H1 (cell line): ENCODE measurements at regions of chr10 and their contacts with region 1.

Region 1: GRCh38 chr10:71431239-71432100 is 34.8 kb downstream of the CDH23 start:
- DNase-seq: peak in 1 of 2 experiments; percentile 58
- H3K4me3 ChIP-seq: no peak overlapping the region
- H3K27ac ChIP-seq: no peak overlapping the region
- H3K4me1 ChIP-seq: peaks cover 0 to 2% (median 0%) of the 10 kb centered on the region in 4 experiments; a peak in 2 of 7 replicates
- H3K27me3 ChIP-seq: no peaks in the 10 kb centered on the region
- CTCF ChIP-seq: peak; percentile 36 to 62 (median 54)
- EP300 ChIP-seq: no peak
- POLR2A ChIP-seq: no peak
- RAD21 ChIP-seq: peak in 1 of 2 experiments; percentile 38; a peak in 2 of 4 replicates

Region 2: GRCh38 chr10:70866424-70866823 is 565.0 kb before region 1 on chr10:
- CTCF ChIA-PET with region 1: no interaction called
- POLR2A ChIA-PET with region 1: no interaction called
- DNase-seq: no peak
- H3K4me3 ChIP-seq: no peak overlapping the region
- H3K27ac ChIP-seq: no peak overlapping the region
- H3K4me1 ChIP-seq: no peaks in the 10 kb centered on the region
- H3K27me3 ChIP-seq: no peaks in the 10 kb centered on the region
- CTCF ChIP-seq: no peak
- EP300 ChIP-seq: no peak
- POLR2A ChIP-seq: no peak
- RAD21 ChIP-seq: no peak

Region 3: DNA sequence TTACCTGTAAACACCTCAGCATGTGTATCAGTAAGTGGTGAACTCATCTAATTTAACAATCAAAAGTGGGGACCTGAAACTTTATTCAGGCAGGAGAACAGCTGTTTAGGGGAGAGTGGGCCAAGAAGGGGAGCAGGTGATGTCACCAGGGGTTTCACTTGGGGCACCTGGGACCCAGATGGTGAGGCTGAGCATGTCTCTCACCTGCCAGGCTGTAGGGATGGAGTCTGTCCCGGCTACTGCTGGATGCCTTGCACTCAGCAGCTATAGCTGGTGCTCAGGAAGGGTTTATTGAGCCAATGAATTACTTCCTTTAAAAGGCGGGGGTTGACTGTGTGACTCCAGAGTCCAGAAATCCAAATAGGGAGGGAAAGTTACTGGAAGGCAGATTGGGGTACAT is 11.7 kb before region 1 on chr10:
- CTCF ChIA-PET with region 1: interaction called, 87 read pairs
- POLR2A ChIA-PET with region 1: interaction called, 5 read pairs
- DNase-seq: no peak
- H3K4me3 ChIP-seq: no peak overlapping the region
- H3K27ac ChIP-seq: no peak overlapping the region
- H3K4me1 ChIP-seq: no peaks in the 10 kb centered on the region; a peak in 1 of 7 replicates
- H3K27me3 ChIP-seq: peaks cover 0 to 4% (median under 1%) of the 10 kb centered on the region in 4 experiments; a peak in 3 of 7 replicates
- CTCF ChIP-seq: no peak
- EP300 ChIP-seq: no peak
- POLR2A ChIP-seq: no peak
- RAD21 ChIP-seq: no peak

Region 4: GRCh38 chr10:71443676-71444075 is 12.2 kb after region 1 on chr10:
- CTCF ChIA-PET with region 1: interaction called, 37 read pairs
- POLR2A ChIA-PET with region 1: interaction called, 5 read pairs
- DNase-seq: no peak
- H3K4me3 ChIP-seq: no peak overlapping the region
- H3K27ac ChIP-seq: no peak overlapping the region
- H3K4me1 ChIP-seq: peaks cover 0 to 5% (median 2%) of the 10 kb centered on the region in 4 experiments; a peak in 5 of 7 replicates
- H3K27me3 ChIP-seq: no peaks in the 10 kb centered on the region
- CTCF ChIP-seq: no peak
- EP300 ChIP-seq: no peak
- POLR2A ChIP-seq: no peak
- RAD21 ChIP-seq: no peak

Region 5: DNA sequence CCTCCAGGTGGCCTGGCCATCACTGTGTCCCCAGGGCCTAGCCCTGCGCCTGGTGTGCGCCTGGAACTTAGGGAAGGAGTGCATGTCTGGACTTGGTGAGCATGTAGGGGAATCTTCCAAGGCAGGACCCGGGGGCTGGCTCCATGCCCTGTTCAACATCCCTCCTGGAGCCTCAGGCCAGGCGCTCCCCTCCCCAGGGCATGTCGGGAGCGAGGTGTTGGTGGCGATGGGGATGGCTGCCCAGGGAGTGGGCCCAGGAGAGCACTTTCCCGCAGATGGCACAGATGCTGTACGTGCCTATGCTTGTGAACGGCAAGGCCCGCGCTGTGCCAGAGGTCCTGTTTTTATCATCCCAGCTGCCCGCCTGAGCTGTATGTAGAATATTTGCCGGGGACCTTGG is 20.3 kb after region 1 on chr10:
- CTCF ChIA-PET with region 1: interaction called, 31 read pairs
- POLR2A ChIA-PET with region 1: no interaction called
- DNase-seq: no peak
- H3K4me3 ChIP-seq: no peak overlapping the region
- H3K27ac ChIP-seq: no peak overlapping the region
- H3K4me1 ChIP-seq: no peaks in the 10 kb centered on the region
- H3K27me3 ChIP-seq: no peaks in the 10 kb centered on the region
- CTCF ChIP-seq: no peak
- EP300 ChIP-seq: no peak
- POLR2A ChIP-seq: no peak
- RAD21 ChIP-seq: no peak

Region 6: DNA sequence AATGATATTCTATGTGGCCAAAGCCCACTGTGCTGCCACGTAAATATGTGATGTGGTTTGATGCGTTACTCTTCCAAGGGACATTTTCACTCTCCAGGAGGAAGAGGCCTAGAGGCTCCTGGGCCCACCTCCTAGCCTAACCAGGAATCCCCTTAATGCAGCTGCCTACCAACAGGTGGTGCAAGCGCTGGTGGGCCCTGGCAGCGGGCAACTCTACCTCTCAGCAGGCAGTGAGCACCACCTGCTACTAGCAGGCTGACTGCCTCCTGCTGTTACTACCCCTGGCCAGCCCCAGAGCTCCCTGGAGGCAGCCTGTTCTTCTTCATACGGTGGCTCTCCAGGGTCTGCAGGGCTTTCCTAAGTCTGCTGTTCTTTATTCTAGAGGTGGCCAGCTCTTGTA is 28.0 kb after region 1 on chr10:
- CTCF ChIA-PET with region 1: interaction called, 31 read pairs
- POLR2A ChIA-PET with region 1: no interaction called
- DNase-seq: no peak
- H3K4me3 ChIP-seq: no peak overlapping the region
- H3K27ac ChIP-seq: no peak overlapping the region
- H3K4me1 ChIP-seq: no peaks in the 10 kb centered on the region
- H3K27me3 ChIP-seq: no peaks in the 10 kb centered on the region
- CTCF ChIP-seq: peak; percentile 38 to 62 (median 40)
- EP300 ChIP-seq: no peak
- POLR2A ChIP-seq: no peak
- RAD21 ChIP-seq: peak; percentile 27 to 45; a peak in 3 of 4 replicates

Region 7: DNA sequence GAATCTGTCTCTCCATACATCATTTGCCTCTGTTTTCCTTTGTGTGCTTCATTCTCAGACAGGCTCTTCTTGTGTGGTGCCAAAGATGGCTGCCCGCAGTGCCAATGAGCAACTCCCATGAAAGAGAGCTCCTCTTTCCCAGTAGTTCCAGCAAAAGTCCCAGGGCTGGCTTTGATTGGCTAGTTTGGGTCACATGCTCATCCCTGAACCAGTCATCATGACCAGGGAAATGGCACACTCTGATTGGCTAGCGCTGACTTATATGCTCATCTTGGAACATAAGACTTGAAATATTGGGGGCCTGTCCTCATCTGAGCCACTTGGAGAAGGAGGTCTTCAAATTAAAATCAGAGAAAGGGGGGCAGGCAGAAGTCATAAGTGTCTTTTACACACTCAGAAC is 78.0 kb after region 1 on chr10:
- CTCF ChIA-PET with region 1: no interaction called
- POLR2A ChIA-PET with region 1: no interaction called
- DNase-seq: no peak
- H3K4me3 ChIP-seq: no peak overlapping the region
- H3K27ac ChIP-seq: no peak overlapping the region
- H3K4me1 ChIP-seq: no peaks in the 10 kb centered on the region
- H3K27me3 ChIP-seq: no peaks in the 10 kb centered on the region; a peak in 1 of 7 replicates
- CTCF ChIP-seq: no peak
- EP300 ChIP-seq: no peak
- POLR2A ChIP-seq: no peak
- RAD21 ChIP-seq: no peak